ENCODE measurements at regions of chr1 and their contacts with region 1.

Region 1: GRCh38 chr1:66725885-66726665 is 26.2 kb upstream of the DYNLT5 start:
- DNase-seq: no peak
- H3K4me3 ChIP-seq: no peak overlapping the region
- H3K27ac ChIP-seq: no peak overlapping the region
- H3K4me1 ChIP-seq: peaks cover 0 to 9% (median 3%) of the 10 kb centered on the region in 4 donors
- H3K27me3 ChIP-seq: no peaks in the 10 kb centered on the region
- CTCF ChIP-seq: peak; percentile 76 to 87 (median 86)
- EP300 ChIP-seq: no peak
- POLR2A ChIP-seq: no peak

Region 2: DNA sequence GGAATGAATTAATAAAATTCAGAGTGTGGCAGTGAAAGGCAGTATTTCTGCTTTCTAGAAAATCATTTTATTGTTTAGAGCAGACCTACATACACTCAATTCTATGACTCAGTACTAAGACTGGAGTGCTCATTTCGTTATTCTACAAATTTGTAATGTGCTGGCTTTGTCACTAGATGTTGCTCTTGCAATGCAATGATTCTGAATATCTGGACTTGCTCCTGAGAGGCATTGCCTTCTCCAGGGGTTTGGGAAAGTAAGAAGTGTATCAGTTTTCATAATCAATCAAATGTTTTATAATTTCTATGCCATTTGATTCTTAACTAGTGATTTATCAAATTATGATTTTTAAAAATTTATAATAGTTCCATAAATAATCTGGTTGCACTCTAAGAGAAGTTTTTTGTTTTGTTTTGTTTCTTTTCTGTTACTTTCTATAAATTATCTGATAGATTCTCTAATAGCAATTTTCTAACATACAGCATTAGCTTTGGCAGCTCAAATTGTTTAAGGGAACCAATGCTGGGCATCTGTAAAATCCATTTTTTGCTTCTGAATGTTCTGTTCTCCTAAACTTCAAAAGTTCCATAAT is 472.6 kb before region 1 on chr1:
- intact Hi-C with region 1: loop called (anchors 5 kb)
- DNase-seq: no peak
- H3K4me3 ChIP-seq: no peak overlapping the region
- H3K27ac ChIP-seq: no peak overlapping the region
- H3K4me1 ChIP-seq: peaks cover 0 to 4% (median 0%) of the 10 kb centered on the region in 4 donors
- H3K27me3 ChIP-seq: no peaks in the 10 kb centered on the region
- CTCF ChIP-seq: peak; percentile 70 to 78 (median 76)
- EP300 ChIP-seq: no peak
- POLR2A ChIP-seq: no peak

Region 3: DNA sequence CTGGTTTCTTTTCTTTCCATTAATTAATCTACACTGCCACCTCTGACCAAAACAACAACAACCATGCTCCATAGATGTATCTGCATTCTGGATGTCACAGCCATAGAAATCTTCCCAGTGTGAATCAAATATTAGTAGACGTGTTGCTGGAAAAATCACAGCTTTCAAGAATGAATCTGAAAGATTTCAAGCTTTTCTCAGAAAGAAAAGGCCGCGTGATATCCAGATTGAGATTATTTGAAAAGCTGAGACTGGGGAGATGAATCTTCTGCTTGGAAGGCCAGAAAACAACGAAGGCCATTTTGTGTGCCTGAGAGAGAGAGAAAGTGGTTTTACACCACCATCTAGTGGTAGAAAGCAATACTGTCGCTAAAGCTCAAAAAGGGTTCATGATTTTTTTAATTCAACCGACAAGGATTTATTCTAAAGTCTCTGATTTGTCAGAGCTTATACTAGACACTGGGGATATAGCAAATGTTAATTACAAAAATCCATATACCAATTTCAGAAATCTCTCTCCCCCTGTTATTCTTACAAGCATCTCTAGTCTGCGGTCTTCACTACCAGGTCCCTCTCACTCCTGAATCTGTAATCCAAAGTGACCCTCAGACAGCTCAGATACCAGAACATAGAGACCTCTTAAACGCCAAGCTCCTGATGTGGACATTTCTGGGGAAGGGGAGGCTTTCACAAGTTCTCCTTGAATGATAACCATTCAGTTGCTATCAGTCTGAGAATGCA is 279.6 kb before region 1 on chr1:
- intact Hi-C with region 1: loop called (anchors 5 kb)
- DNase-seq: no peak
- H3K4me3 ChIP-seq: no peak overlapping the region
- H3K27ac ChIP-seq: peak overlapping the region in 1 of 4 donors; percentile 42
- H3K4me1 ChIP-seq: peaks cover 21 to 42% (median 29%) of the 10 kb centered on the region in 4 donors
- H3K27me3 ChIP-seq: no peaks in the 10 kb centered on the region
- CTCF ChIP-seq: peak; percentile 83 to 91 (median 89)
- EP300 ChIP-seq: no peak
- POLR2A ChIP-seq: no peak

Region 4: DNA sequence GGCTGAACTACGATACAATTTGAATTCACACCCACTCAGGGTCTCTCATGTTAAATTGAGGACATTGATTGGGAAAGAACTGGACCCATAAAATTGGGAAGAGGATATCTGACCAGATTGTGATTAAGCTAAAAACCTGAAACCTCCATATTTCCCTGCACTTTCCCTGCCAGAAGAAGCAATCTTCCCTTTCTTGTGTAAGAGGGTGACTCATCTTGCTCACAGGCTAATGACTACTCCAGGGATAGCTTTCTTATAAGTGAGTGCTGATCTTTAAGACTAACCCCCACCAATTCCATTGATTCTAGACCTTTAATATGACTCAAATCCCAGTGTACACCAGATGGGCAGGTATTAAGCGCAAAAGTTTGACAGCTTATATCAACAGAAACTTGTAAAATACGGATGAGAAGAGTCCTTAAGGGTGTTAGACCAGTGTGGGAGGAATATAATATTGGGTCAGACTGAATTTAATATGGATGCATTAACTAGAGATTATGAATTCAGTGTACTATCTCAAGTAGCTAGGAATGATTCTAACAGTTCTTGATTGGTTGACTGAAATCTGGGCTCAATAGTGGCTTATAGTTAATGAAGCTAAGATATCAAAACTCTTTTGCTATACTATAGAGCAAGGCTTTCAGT is 204.2 kb before region 1 on chr1:
- intact Hi-C with region 1: loop called (anchors 10 kb)
- DNase-seq: no peak
- H3K4me3 ChIP-seq: no peak overlapping the region
- H3K27ac ChIP-seq: no peak overlapping the region
- H3K4me1 ChIP-seq: no peaks in the 10 kb centered on the region
- H3K27me3 ChIP-seq: no peaks in the 10 kb centered on the region
- CTCF ChIP-seq: no peak
- EP300 ChIP-seq: no peak
- POLR2A ChIP-seq: no peak

Region 5: DNA sequence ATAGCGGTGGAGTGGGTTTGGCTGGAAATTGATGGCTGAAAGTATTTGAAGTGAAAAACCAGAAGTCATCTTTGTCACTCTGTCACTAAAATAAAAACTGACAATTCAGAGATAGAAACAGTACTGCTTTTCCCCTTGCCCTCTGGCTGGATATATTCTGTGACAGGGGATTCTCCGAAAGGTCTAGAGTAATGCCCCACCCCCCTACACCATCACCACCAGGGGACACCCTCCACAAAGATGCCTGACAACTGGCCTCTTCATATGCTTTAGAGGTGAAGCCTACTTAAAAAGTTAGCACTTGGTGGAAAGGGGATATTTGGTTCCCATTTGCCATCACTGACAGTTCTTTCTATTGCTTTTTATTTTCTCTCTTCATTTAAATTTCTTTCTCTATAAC is 118.6 kb before region 1 on chr1:
- intact Hi-C with region 1: no loop called
- DNase-seq: no peak
- H3K4me3 ChIP-seq: no peak overlapping the region
- H3K27ac ChIP-seq: peak overlapping the region in 1 of 4 donors; percentile 44
- H3K4me1 ChIP-seq: peaks cover 0 to 5% (median 0%) of the 10 kb centered on the region in 4 donors
- H3K27me3 ChIP-seq: no peaks in the 10 kb centered on the region
- CTCF ChIP-seq: no peak
- EP300 ChIP-seq: no peak
- POLR2A ChIP-seq: no peak

Region 6: GRCh38 chr1:66676613-66677298 is 49.3 kb before region 1 on chr1:
- intact Hi-C with region 1: no loop called
- DNase-seq: no peak
- H3K4me3 ChIP-seq: no peak overlapping the region
- H3K27ac ChIP-seq: no peak overlapping the region
- H3K4me1 ChIP-seq: peaks cover 0 to 11% (median 0%) of the 10 kb centered on the region in 4 donors
- H3K27me3 ChIP-seq: no peaks in the 10 kb centered on the region
- CTCF ChIP-seq: no peak
- EP300 ChIP-seq: no peak
- POLR2A ChIP-seq: no peak

Region 7: DNA sequence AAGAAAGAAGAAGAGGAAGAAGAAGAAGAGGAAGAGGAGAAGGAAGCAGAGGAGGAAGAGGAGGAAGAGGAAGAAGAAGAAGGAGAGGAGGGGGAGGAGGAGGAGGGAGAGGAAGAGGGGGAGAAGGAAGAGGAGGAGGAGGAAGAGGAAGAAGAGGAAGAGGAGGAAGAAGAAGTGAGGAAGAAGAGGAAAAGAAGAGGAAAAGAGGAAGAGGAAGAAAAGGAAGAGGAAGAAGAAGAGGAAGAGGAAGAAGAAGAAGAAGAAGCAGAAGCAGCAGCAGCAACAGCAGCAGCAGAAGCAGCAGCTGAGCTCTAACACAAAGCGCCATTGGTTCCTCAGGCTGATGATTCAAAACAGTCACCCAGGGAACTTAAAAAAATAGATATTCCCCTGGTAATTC is 164.5 kb after region 1 on chr1:
- intact Hi-C with region 1: no loop called
- DNase-seq: no peak
- H3K4me3 ChIP-seq: no peak overlapping the region
- H3K27ac ChIP-seq: no peak overlapping the region
- H3K4me1 ChIP-seq: no peaks in the 10 kb centered on the region
- H3K27me3 ChIP-seq: no peaks in the 10 kb centered on the region
- CTCF ChIP-seq: no peak
- EP300 ChIP-seq: no peak
- POLR2A ChIP-seq: no peak

Measured in esophagus muscularis mucosa (tissue), 4 donors.